ENCODE measurements at regions of chrX and their contacts with region 1.

Region 1: DNA sequence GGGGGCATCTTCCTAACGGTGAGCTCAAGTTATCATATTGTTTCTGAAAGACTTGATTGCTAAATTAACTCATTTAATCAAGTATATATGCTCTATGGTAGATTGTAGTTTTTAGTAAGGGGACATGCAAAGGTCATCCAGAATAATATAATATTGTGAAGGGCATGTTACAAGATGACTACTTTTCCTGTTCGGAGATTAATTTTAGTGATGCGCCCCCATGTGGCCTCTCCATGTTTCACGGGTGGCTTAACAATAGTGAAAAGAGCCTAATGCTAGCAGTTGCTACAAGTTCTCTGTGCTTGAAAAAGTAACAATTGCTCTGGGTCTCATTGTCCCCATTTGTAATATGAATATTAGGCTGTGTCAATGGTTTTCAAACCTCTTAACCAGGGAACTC is 12.2 kb downstream of the SMPX start:
- DNase-seq: peak in 1 of 2 donors; percentile 15
- H3K4me3 ChIP-seq: no peak overlapping the region
- CTCF ChIP-seq: no peak
- POLR2A ChIP-seq: no peak

Region 2: DNA sequence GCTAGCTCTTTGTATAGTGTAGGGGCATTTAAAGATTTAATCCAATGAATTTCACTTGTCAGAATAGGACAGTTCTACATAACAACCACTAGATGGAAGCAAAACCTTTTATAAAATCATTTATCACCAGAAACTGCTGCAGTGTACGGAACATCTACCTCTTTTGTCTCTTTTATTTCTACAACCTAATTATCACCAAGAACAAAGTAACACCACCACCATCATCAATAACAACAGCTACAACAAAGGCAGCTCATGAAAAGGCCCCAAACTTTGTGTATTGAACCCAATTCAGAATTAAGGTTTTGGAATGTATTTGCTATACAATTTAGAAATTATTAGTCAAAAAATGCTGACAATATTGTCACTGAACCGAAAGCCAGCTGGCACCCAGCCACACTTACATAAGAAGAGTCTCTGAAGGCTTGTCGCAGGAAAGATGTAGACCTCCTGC is 1218.2 kb before region 1 on chrX:
- intact Hi-C with region 1: loop called (anchors 10 kb)
- DNase-seq: no peak
- H3K4me3 ChIP-seq: no peak overlapping the region
- CTCF ChIP-seq: no peak
- POLR2A ChIP-seq: no peak

Region 3: DNA sequence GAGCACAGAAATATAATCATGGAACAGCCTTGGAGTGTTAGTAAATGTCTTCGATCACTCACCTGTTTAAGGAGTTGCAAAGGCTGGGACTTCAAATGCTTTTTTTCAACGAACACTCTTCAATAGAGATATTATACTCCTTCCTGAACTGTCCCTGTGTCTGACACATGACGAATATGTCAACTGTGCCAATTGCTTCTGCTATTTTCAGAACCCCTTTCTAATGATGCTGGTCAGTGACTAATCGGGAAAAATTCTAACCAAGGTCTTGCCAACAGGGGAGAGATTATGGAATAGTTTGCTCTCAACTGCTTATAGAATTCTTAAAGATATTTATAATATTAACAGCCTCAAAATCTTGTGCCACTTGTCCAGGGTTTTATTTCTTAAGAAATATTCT is 79.1 kb before region 1 on chrX:
- intact Hi-C with region 1: loop called (anchors 2 kb)
- DNase-seq: no peak
- H3K4me3 ChIP-seq: no peak overlapping the region
- CTCF ChIP-seq: no peak
- POLR2A ChIP-seq: no peak